ENCODE measurements at regions of chr2 and their contacts with region 1.

Region 1: DNA sequence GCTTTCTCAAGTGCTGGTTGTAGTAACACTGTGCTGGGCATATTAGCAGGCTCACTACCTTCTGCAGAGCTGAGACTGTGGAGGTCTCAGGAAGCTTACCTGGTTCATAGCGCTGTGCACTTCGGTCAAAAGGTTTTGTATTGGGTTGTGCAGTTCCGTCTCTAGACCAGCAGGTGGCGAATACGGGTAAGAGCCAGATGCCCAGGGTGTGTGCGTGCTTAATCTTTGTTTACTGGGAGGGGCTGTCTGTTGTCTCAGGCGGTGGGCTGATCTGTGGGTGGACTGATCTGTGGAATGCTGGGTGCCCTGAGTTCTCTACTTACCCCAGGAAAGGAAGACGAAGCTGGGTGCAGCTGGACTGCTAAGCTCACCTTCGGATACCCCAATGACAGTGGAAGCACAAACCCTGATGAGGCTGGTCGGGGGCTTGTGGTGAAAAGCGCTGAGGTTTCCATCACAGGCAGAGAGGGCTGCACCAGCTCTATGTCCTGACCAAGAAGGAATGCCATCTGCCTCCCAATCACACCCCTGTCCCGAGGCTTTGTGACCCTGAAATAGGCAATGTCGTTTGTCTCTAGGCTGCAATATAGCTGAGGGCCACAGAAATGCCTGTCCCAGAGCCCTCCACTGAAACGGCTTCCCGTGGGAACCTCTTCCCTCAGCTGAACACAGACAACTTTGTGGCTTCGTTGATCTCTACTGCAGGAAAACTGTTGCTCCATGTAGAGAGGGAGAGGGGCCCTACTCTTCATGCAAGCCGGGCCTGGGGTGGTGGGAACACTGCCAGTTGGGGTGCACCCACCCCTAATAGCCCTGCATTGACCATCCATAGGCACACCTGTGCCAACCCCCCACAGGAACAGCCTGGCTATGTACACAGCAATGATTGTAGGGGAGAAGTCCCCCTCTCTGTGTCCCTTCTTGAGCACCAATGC is 45.9 kb upstream of the FAM117B start:
- DNase-seq: peak; percentile 81 to 85
- H3K4me3 ChIP-seq: no peak overlapping the region
- H3K4me1 ChIP-seq: peaks cover 6% of the 10 kb centered on the region
- H3K27me3 ChIP-seq: no peaks in the 10 kb centered on the region

Region 2: DNA sequence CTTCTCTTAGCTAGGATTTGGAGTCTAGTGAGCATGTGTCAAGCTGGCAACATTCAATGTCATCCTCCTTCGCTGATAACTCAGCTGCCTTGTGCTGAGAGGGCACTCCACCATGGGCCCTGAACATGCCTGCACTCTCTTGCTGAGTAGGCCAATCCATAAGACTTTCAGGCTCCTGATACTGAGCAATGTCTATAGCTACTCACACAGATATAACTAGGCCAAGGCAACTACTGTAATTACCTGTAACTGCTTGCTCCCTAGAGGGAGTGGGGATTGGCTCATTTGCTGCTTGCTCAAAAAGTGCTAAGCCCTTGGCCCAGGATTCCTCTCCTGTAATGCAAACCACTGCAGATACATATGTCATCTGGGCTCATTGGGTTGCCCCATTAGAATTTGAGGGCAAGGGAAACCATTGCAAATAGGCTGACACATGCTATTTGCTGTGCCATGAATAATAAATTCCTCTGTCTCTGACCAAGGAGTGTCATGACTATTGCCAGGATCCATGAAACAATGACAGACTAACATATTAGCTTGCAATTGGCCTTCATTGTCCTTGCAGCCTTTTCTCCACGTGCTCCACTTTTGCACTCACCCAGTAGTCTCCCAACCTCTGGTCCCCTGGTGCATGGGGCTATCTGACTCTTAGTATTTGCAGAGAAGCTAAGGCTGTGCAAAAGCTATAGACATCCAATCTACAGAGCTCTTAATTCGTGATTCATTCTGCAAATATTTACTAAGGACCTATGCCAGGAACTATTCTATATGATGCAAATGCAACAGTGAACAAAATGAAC is 249.6 kb before region 1 on chr2:
- in situ Hi-C with region 1: no loop called
- DNase-seq: peak in 1 of 2 experiments; percentile 14
- H3K4me3 ChIP-seq: no peak overlapping the region
- H3K4me1 ChIP-seq: no peaks in the 10 kb centered on the region
- H3K27me3 ChIP-seq: no peaks in the 10 kb centered on the region

Region 3: DNA sequence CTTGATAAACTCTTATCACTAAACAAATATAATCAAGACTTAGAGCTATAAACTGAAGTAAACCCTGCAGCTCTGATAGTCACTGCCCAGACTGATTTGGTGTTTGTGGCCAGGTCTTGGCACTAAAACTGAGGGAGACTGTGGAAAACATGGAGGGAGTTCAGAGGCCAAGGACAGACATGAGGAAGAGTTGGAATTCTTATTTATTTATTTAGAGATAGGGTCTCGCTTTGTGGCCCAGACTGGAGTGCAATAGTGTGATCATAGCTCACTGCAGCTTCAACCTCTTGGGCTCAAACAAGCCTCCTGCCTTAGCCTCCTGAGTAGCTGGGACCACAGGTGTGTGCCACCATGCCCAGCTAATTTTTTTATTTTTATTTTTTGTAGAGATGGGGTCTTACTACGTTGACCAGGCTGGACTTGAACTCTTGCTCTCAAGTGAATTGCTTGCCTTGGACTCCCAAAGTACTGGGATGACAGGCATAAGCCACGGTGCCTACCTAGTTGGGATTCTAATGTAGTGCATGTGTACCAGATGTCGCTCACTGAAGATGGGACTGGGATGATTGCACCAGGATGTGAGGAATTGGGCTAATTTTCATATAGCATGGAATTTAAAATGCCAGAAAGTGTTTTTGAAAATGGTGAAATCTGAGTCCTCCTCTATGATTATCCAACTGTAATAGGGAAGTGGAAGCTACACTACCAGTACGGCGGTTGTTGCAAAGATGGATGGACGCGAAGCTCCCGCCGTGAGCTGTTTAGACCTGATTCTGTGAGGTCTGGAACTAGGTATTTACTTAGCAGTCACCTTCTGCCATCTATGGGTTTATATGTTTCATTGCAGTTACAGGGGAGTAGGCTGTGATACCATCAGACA is 1226.0 kb after region 1 on chr2:
- in situ Hi-C with region 1: loop called (anchors 25 kb)
- DNase-seq: peak; percentile 59 to 77
- H3K4me3 ChIP-seq: no peak overlapping the region
- H3K4me1 ChIP-seq: no peaks in the 10 kb centered on the region; the same call in 1 of the 2 replicates
- H3K27me3 ChIP-seq: peaks cover 10% of the 10 kb centered on the region; the same call in 1 of the 2 replicates

Region 4: GRCh38 chr2:203909261-203909967 is 1320.5 kb after region 1 on chr2:
- in situ Hi-C with region 1: loop called (anchors 25 kb)
- DNase-seq: peak; percentile 30 to 36
- H3K4me3 ChIP-seq: no peak overlapping the region
- H3K4me1 ChIP-seq: no peaks in the 10 kb centered on the region
- H3K27me3 ChIP-seq: no peaks in the 10 kb centered on the region

Measured in HAP-1 (cell line).